Right cardiac atrium (tissue), 5 donors: ENCODE measurements at regions of chr4 and their contacts with region 1.

Region 1: GRCh38 chr4:147480891-147481576 is at the start of gene EDNRA:
- DNase-seq: peak; percentile 39 to 80 (median 71)
- ATAC-seq: peak; percentile 80 to 83
- H3K4me3 ChIP-seq: peak within 1 kb of the TSS; percentile 53
- H3K27ac ChIP-seq: peak within 1 kb of the TSS; percentile 76
- H3K4me1 ChIP-seq: peaks cover 2% of the 10 kb centered on the region
- H3K27me3 ChIP-seq: no peaks in the 10 kb centered on the region
- total RNA-seq, gene EDNRA: 43.3 to 99.8 (median 66.2) TPM

Region 2: DNA sequence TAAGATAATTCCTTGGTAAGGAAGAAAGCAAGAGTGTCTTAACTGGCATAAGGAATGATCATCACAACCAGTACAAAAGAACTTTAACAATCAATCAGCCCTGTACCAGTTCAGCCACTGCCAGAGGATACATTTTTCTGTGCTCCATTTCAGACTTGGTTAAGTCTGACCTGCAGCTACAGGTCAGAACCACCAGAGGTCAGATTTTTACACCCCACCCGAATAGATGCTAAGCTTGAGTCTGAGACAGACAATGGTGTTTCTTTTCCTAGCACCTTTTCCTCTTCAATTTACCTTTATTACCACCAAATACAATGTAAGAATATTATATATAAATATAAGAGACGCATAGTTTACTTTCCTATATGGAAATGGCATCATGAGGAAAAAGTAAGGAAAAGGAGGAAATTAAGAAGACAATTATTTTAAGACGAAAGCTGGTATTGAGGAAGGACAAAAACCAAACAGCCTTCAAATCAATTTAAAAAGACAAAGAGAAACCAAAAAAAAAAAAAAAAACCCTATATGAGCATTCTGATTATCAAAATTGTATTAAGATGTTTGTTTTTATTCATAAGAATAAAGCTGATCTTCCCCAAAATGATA is 320.0 kb before region 1 on chr4:
- intact Hi-C with region 1: loop called in 1 of 4 experiments (anchors 10 kb)
- DNase-seq: no peak
- ATAC-seq: peak; percentile 62 to 70
- H3K4me3 ChIP-seq: no peak overlapping the region
- H3K27ac ChIP-seq: no peak overlapping the region
- H3K4me1 ChIP-seq: peaks cover 4% of the 10 kb centered on the region
- H3K27me3 ChIP-seq: no peaks in the 10 kb centered on the region

Region 3: DNA sequence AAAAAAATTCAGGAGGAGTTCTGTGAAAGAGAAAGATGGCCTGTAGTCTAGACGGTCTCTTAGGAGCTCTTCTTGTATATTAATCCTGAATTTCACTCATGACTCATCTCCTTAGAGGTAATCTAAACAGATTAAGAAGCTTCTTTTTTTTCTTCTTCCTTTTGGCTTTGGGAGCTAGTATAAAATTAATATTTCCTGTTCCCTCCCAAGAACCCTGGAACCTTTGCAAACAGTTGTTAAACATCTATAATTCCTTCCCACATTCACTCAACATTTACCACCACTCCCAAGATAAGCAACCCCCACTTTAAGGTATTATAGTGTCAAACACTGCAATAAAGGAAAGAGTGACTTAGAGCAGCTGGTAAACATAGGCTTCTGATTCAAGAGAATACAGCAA is 146.6 kb before region 1 on chr4:
- intact Hi-C with region 1: loop called in 1 of 4 experiments (anchors 10 kb)
- DNase-seq: no peak
- ATAC-seq: no peak
- H3K4me3 ChIP-seq: no peak overlapping the region
- H3K27ac ChIP-seq: no peak overlapping the region
- H3K4me1 ChIP-seq: no peaks in the 10 kb centered on the region
- H3K27me3 ChIP-seq: no peaks in the 10 kb centered on the region

Region 4: DNA sequence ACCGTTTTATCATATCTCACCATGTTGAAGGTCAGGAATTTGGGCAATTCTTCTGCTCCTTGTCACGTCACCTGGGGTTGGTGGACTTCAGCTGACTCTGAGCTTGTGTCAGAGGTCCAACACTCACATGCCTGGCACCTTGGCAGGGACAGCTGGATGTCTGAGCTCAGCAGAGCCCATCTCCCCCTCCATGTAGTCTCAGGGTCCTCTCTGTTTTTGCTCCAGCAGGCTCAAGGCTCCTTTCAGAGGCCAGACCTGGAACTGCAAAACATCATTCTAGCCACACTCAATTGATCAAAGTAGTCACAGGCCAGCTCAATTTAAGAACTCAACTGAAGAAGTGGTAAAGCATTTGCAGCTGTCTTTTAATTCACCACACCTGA is 45.2 kb after region 1 on chr4:
- intact Hi-C with region 1: loop called in 1 of 4 experiments (anchors 5 kb)
- DNase-seq: peak; percentile 31 to 67 (median 59)
- ATAC-seq: peak; percentile 86 to 89
- H3K4me3 ChIP-seq: no peak overlapping the region
- H3K27ac ChIP-seq: peak overlapping the region; percentile 42
- H3K4me1 ChIP-seq: peaks cover 3% of the 10 kb centered on the region
- H3K27me3 ChIP-seq: no peaks in the 10 kb centered on the region